AG04450 (cell line): ENCODE measurements at regions of chr6 and their contacts with region 1.

Region 1: DNA sequence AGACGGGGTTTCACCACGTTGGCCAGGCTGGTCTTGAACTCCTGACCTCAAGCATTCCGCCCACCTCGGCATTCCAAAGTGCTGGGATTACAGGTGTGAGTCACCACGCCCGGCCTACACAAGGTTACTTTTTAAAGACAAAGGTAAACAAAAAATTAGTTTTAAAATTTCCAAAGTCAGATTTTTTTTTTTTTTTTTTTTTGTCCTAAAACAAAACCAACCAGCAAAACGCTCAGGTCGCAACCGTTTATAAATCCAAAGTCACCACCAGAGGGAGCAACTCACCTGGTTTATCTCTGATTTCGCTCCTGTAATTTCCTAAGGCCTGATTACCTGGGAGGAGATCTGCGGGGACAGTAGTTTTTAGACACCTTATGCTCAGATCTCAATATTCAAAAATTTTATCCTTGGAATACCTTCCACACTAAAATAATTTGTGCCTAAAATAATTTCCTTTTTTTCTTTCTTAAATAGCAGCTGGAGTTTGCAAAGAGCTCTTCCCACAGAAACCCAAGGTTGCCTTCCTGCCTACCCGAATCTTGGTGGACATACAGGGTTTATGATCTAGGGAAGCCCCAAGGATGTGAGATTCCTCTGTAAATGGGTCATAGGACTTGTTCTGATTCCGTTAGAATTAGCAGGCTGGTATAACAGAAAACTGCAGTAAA is 19.8 kb upstream of the TREM1 start:
- DNase-seq: no peak
- H3K4me3 ChIP-seq: no peak overlapping the region
- H3K27ac ChIP-seq: no peak overlapping the region
- H3K27me3 ChIP-seq: peaks cover 15% of the 10 kb centered on the region
- CTCF ChIP-seq: peak; percentile 64

Region 2: DNA sequence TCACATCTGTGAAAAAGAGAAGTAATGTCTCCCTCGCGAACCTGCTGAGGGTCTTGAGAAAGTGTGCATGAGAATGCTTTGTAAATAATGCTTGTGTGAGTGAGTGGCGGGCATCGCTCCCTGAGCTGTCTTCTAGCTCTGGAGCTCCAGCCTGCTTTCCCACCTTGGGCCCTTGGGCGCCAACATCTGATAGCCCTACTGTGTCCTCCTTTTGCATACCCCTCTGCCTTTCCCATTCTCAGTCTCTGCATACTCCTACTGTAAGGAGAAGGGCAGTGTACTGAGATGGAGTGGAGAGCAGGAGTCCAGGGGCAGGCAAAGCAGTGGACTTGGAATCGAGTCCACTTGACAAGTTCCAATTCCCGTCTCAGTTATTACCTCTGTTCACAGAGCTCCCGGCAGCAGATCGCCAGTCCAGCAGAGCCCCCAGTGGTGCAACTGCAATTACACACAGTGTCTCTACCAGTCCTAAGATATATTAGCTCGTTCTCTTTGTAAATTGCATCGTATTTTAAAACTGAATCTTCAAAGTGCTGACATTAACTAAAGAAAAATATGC is 28.2 kb after region 1 on chr6:
- CTCF ChIA-PET with region 1: interaction called, 13 read pairs
- POLR2A ChIA-PET with region 1: no interaction called
- DNase-seq: no peak
- H3K4me3 ChIP-seq: no peak overlapping the region
- H3K27ac ChIP-seq: no peak overlapping the region
- H3K27me3 ChIP-seq: peaks cover 53% of the 10 kb centered on the region
- CTCF ChIP-seq: peak; percentile 47

Region 3: DNA sequence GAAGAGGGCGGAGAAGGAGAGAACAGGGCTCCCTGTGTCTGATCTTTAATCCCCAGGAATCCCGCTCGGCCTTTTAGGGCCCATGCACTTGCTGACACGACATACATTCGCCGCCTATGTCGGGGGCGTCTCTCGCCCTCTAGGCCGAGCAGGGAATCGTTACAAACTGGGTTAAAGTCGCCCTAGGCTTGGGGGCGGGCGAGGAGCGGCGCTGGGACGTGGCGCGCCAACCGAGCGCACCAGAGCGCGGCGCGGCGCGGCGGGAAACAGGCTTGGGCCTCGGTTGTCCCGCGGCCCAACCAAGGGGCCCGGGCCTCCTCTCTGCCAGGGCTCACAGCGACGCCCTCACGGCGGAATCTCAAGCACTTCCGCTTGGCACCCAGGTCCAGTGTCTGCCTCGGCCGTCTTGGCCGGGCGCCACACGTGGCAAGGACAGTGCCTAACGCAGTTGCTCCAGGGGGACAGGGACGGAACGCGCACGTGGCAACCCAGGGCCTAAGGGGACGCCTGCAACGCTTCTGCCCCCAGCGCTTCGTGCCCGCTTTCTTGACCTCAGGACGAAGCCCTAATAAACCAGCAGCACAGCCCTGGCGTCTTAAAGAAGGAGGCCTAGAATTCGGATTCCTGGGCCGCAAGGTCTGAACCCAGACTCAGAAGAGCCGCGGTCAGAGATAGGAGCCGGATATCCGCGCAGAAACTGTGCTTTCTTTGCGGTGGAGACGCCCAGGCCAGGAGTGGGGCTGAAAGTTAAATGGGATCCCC is 100.6 kb after region 1 on chr6:
- CTCF ChIA-PET with region 1: no interaction called
- POLR2A ChIA-PET with region 1: no interaction called
- DNase-seq: no peak
- H3K4me3 ChIP-seq: no peak overlapping the region
- H3K27ac ChIP-seq: no peak overlapping the region
- H3K27me3 ChIP-seq: peaks cover 22% of the 10 kb centered on the region
- CTCF ChIP-seq: no peak